T-cell (primary cell): ENCODE measurements at regions of chr6 and their contacts with region 1.

Region 1: DNA sequence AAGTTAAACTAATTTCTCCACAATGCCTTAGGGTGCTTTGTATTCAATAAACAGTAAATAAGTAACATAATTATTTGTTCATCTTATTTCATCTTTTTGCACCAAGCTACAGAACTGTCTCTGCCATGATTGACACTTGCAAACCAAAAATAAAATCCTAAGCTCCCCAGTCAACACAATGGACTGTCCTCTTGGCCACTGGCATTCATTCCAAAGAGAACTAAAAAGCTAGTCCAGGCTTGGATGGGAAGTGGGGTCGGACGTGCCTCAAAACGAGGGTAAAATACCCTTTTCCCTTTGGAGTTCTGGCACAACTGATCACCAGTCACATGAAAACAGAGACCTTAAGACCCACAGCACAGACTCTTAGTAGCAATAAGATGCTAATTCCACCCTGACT is 66.4 kb upstream of the THBS2 start:
- DNase-seq: no peak
- ATAC-seq: no peak
- H3K4me3 ChIP-seq: no peak overlapping the region
- H3K4me3 Mint-ChIP-seq: no peak overlapping the region
- H3K27ac ChIP-seq: no peak overlapping the region
- H3K27ac Mint-ChIP-seq: no peak overlapping the region
- H3K4me1 ChIP-seq: no peaks in the 10 kb centered on the region
- H3K4me1 Mint-ChIP-seq: no peaks in the 10 kb centered on the region
- H3K27me3 ChIP-seq: peaks cover 3 to 19% of the 10 kb centered on the region in 2 experiments
- H3K27me3 Mint-ChIP-seq: peaks cover 0 to 4% of the 10 kb centered on the region in 2 donors

Region 2: GRCh38 chr6:167980911-167981580 is 1339.0 kb before region 1 on chr6:
- CTCF ChIA-PET with region 1: no interaction called
- POLR2A ChIA-PET with region 1: interaction called in 1 of 2 experiments, 13 read pairs
- DNase-seq: no peak
- ATAC-seq: no peak
- H3K4me3 ChIP-seq: no peak overlapping the region
- H3K4me3 Mint-ChIP-seq: no peak overlapping the region
- H3K27ac ChIP-seq: no peak overlapping the region
- H3K27ac Mint-ChIP-seq: no peak overlapping the region
- H3K4me1 ChIP-seq: no peaks in the 10 kb centered on the region
- H3K4me1 Mint-ChIP-seq: no peaks in the 10 kb centered on the region
- H3K27me3 ChIP-seq: peaks cover 0 to 9% of the 10 kb centered on the region in 2 experiments
- H3K27me3 Mint-ChIP-seq: no peaks in the 10 kb centered on the region

Region 3: GRCh38 chr6:169296170-169296569 is 23.8 kb before region 1 on chr6:
- CTCF ChIA-PET with region 1: no interaction called
- POLR2A ChIA-PET with region 1: no interaction called
- DNase-seq: no peak
- ATAC-seq: no peak
- H3K4me3 ChIP-seq: no peak overlapping the region
- H3K4me3 Mint-ChIP-seq: no peak overlapping the region
- H3K27ac ChIP-seq: no peak overlapping the region
- H3K27ac Mint-ChIP-seq: no peak overlapping the region
- H3K4me1 ChIP-seq: no peaks in the 10 kb centered on the region
- H3K4me1 Mint-ChIP-seq: no peaks in the 10 kb centered on the region
- H3K27me3 ChIP-seq: peaks cover 0 to 4% of the 10 kb centered on the region in 2 experiments
- H3K27me3 Mint-ChIP-seq: peaks cover 13 to 16% of the 10 kb centered on the region in 2 donors